ENCODE measurements at regions of chr1 and their contacts with region 1.

Region 1: GRCh38 chr1:226736908-226737818 is 1.9 kb downstream of the ITPKB start:
- DNase-seq: peak; percentile 68
- H3K4me3 Mint-ChIP-seq: peak overlapping the region; percentile 77
- H3K27ac Mint-ChIP-seq: peak overlapping the region; percentile 98
- H3K4me1 Mint-ChIP-seq: peaks cover 38% of the 10 kb centered on the region
- H3K27me3 Mint-ChIP-seq: no peaks in the 10 kb centered on the region

Region 2: DNA sequence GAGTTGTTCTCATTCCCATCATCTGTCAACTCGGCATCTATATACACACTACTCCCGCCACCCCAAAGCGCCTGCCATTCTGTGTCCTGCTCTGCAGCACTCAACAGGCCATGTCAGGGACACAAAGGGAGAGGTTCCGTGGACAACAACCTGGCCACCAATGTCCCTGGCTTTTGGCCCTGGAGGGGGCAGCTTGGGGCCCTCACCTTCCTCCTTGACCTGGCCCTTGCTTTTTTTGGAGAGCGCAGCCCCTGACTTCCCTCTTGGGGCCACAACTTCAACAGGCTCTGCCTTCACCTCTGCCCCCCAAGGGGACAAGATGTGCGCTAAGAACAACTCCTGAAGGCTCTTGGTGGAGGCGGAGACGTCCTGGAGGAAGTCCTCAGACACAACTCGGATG is 357.4 kb before region 1 on chr1:
- CTCF ChIA-PET with region 1: no interaction called
- intact Hi-C with region 1: no loop called
- DNase-seq: no peak
- H3K4me3 Mint-ChIP-seq: no peak overlapping the region
- H3K27ac Mint-ChIP-seq: peak overlapping the region; percentile 31
- H3K4me1 Mint-ChIP-seq: peaks cover 14% of the 10 kb centered on the region
- H3K27me3 Mint-ChIP-seq: no peaks in the 10 kb centered on the region

Region 3: DNA sequence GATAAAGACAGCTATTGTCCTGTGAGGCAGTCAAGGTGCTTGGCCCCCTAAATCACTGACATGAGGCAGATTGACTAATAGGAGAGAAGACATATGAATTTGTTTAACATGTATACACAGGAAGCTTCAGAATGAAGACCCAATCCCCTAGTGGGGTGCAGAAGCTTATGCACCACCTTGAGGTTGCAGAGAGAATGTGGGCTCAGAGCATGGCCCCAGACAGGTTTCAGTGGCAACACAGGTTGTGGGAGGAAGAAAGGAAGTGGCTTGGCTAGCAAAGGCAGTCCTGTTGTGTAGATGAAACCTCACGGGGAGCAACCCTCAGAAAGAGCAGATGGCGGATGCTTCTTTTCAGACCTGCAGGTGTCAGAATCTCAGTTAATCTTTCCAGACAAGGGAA is 292.3 kb before region 1 on chr1:
- CTCF ChIA-PET with region 1: no interaction called
- intact Hi-C with region 1: no loop called
- DNase-seq: peak; percentile 80
- H3K4me3 Mint-ChIP-seq: no peak overlapping the region
- H3K27ac Mint-ChIP-seq: peak overlapping the region; percentile 47
- H3K4me1 Mint-ChIP-seq: peaks cover 31% of the 10 kb centered on the region
- H3K27me3 Mint-ChIP-seq: no peaks in the 10 kb centered on the region

Region 4: GRCh38 chr1:226589008-226589733 is 148.0 kb before region 1 on chr1:
- CTCF ChIA-PET with region 1: no interaction called
- intact Hi-C with region 1: no loop called
- DNase-seq: no peak
- H3K4me3 Mint-ChIP-seq: no peak overlapping the region
- H3K27ac Mint-ChIP-seq: no peak overlapping the region
- H3K4me1 Mint-ChIP-seq: no peaks in the 10 kb centered on the region
- H3K27me3 Mint-ChIP-seq: no peaks in the 10 kb centered on the region

Region 5: DNA sequence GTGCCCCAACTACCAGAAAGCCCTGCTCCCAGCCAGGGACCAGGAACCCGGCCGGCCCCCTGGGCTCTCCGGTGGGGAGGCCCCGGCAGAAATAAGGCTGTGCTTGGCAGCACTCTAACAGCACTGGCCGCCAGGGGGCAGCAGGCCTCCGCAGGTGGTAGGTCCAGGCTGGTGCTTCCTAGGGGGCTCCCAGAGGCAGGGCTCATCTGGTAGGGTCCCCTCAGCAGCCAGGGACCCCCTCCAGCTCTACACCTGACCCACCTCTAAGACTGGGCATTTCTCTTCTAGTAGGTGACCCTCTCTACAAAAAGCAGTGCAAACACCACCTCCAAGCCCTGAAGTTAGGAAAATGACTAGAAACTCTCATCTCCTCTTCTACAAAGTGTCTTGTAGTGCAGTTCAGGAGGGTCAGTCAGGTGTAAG is 103.0 kb before region 1 on chr1:
- CTCF ChIA-PET with region 1: interaction called, 12 read pairs
- intact Hi-C with region 1: loop called (anchors 1 kb)
- DNase-seq: peak; percentile 87
- H3K4me3 Mint-ChIP-seq: no peak overlapping the region
- H3K27ac Mint-ChIP-seq: peak overlapping the region; percentile 3
- H3K4me1 Mint-ChIP-seq: peaks cover 46% of the 10 kb centered on the region
- H3K27me3 Mint-ChIP-seq: no peaks in the 10 kb centered on the region

Region 6: GRCh38 chr1:226679853-226680516 is 57.2 kb before region 1 on chr1:
- CTCF ChIA-PET with region 1: interaction called, 4 read pairs
- intact Hi-C with region 1: loop called (anchors 1 kb)
- DNase-seq: peak; percentile 84
- H3K4me3 Mint-ChIP-seq: peak overlapping the region; percentile 67
- H3K27ac Mint-ChIP-seq: peak overlapping the region; percentile 92
- H3K4me1 Mint-ChIP-seq: peaks cover 96% of the 10 kb centered on the region
- H3K27me3 Mint-ChIP-seq: no peaks in the 10 kb centered on the region

Region 7: GRCh38 chr1:226708342-226708780 is 28.8 kb before region 1 on chr1:
- CTCF ChIA-PET with region 1: interaction called, 9 read pairs
- intact Hi-C with region 1: loop called (anchors 1 kb)
- DNase-seq: peak; percentile 66
- H3K4me3 Mint-ChIP-seq: peak overlapping the region; percentile 71
- H3K27ac Mint-ChIP-seq: peak overlapping the region; percentile 99
- H3K4me1 Mint-ChIP-seq: peaks cover 90% of the 10 kb centered on the region
- H3K27me3 Mint-ChIP-seq: no peaks in the 10 kb centered on the region

Region 8: DNA sequence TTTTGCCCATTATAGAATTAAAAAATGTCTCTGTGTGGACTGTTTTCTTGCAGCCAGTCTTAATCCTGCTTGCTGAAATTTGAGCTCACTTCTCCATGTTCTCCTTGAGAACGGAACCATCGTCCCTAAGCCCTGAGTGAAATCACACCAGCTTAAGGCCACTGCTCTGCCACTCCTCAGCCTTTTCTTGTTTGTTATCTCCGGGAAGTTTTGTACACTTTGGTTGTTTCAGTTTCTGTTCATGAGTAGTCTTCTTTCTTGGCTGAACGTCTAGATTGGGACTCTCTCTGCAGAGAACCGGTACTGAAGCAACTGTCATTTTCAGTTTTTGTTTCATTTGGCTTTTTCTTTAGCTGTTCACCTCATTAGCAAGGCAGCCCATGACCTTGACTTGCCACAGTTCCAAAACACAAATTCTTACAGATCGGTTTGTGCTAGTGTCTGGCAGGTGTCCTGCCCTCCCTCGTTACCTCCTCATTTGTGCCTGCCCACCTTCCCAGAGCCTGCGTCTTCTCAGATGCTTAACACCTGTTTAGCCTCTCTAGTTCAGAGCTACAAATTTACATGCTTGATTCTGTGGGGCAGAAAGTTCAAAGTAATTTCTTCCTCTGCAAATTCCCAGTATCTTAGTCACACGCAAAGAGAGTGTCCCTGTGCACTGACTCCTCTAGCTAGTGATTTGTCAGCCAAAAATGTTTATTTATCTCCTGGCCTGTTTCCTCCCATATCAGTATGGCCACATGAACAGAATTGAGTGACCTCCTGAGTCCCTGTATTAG is 145.7 kb after region 1 on chr1:
- CTCF ChIA-PET with region 1: no interaction called
- intact Hi-C with region 1: loop called (anchors 1 kb)
- DNase-seq: peak; percentile 57
- H3K4me3 Mint-ChIP-seq: peak overlapping the region; percentile 74
- H3K27ac Mint-ChIP-seq: peak overlapping the region; percentile 93
- H3K4me1 Mint-ChIP-seq: peaks cover 51% of the 10 kb centered on the region
- H3K27me3 Mint-ChIP-seq: no peaks in the 10 kb centered on the region

Measured in activated naive CD4-positive, alpha-beta T cell treated with anti-CD3 and anti-CD28 coated beads for 36 hours (primary cell).